Activated B cell treated with CpG ODN at 0.5 μM for 24 hours (primary cell): ENCODE measurements at regions of chr2 and their contacts with region 1.

Region 1: GRCh38 chr2:24075915-24076848 is at the start of gene SF3B6:
- DNase-seq: peak; percentile 98
- ATAC-seq: peak; percentile 87
- H3K4me3 Mint-ChIP-seq: peak within 1 kb of the TSS; percentile 100
- H3K27ac Mint-ChIP-seq: peak within 1 kb of the TSS; percentile 99
- H3K4me1 Mint-ChIP-seq: peaks cover 28% of the 10 kb centered on the region
- H3K27me3 Mint-ChIP-seq: no peaks in the 10 kb centered on the region
- CTCF ChIP-seq: no peak
- total RNA-seq, gene SF3B6: 70.4 and 71.4 TPM in 2 replicates

Region 2: GRCh38 chr2:22673529-22673928 is 1402.7 kb before region 1 on chr2:
- CTCF ChIA-PET with region 1: no interaction called
- POLR2A ChIA-PET with region 1: no interaction called
- intact Hi-C with region 1: no loop called
- DNase-seq: no peak
- ATAC-seq: no peak
- H3K4me3 Mint-ChIP-seq: no peak overlapping the region
- H3K27ac Mint-ChIP-seq: no peak overlapping the region
- H3K4me1 Mint-ChIP-seq: no peaks in the 10 kb centered on the region
- H3K27me3 Mint-ChIP-seq: no peaks in the 10 kb centered on the region
- CTCF ChIP-seq: no peak

Region 3: DNA sequence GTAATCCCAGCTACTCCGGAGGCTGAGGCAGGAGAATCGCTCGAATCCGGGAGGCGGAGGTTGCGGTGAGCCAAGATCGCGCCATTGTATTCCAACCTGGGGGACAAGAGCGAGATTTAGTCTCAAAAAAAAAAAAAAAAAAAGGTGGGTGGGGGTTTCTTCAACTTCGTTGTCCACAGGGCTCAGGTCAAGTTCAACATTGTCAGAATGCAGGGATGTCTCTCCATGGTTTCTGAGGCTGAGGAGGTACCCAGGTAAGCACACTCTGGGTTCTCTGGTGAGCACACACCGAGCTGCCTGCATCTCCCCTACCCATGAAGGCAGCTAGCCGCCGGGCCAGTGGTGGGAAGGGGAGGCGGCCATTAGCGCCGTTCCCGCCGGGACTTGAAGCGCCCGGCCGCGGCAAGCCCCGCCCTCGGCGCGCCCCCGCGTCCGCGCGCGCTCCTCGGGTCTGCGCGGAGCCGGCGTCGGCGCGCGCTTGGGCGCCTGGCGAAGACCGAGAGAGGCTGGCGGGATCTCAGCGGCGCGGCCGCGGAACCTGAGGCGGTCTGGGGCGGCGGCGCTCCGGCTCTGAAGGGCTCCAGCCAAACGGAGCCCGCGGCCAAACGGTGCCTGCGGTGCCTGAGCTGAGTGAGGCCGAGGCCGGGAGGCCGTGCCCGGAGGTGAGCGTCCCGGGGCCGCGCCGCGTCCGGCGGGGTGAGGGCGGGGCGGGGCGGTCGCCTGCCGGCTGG is 136.0 kb before region 1 on chr2 and contains the start of gene UBXN2A:
- CTCF ChIA-PET with region 1: no interaction called
- POLR2A ChIA-PET with region 1: interaction called, 22 read pairs
- intact Hi-C with region 1: loop called (anchors 1 kb)
- DNase-seq: peak; percentile 87
- ATAC-seq: peak; percentile 82
- H3K4me3 Mint-ChIP-seq: peak within 1 kb of the TSS; percentile 88
- H3K27ac Mint-ChIP-seq: peak within 1 kb of the TSS; percentile 81
- H3K4me1 Mint-ChIP-seq: peaks cover 13% of the 10 kb centered on the region
- H3K27me3 Mint-ChIP-seq: no peaks in the 10 kb centered on the region
- CTCF ChIP-seq: no peak
- total RNA-seq, gene UBXN2A: 9.4 and 12.8 TPM in 2 replicates

Region 4: GRCh38 chr2:24046930-24047702 is 29.1 kb before region 1 on chr2 and contains the start of gene WDCP:
- CTCF ChIA-PET with region 1: interaction called, 5 read pairs
- POLR2A ChIA-PET with region 1: interaction called, 45 read pairs
- intact Hi-C with region 1: loop called (anchors 1 kb)
- DNase-seq: peak; percentile 79
- ATAC-seq: peak; percentile 98
- H3K4me3 Mint-ChIP-seq: peak within 1 kb of the TSS; percentile 96
- H3K27ac Mint-ChIP-seq: peak within 1 kb of the TSS; percentile 89
- H3K4me1 Mint-ChIP-seq: peaks cover 29% of the 10 kb centered on the region
- H3K27me3 Mint-ChIP-seq: no peaks in the 10 kb centered on the region
- CTCF ChIP-seq: no peak
- total RNA-seq, gene WDCP: 20.0 and 20.6 TPM in 2 replicates

Region 5: DNA sequence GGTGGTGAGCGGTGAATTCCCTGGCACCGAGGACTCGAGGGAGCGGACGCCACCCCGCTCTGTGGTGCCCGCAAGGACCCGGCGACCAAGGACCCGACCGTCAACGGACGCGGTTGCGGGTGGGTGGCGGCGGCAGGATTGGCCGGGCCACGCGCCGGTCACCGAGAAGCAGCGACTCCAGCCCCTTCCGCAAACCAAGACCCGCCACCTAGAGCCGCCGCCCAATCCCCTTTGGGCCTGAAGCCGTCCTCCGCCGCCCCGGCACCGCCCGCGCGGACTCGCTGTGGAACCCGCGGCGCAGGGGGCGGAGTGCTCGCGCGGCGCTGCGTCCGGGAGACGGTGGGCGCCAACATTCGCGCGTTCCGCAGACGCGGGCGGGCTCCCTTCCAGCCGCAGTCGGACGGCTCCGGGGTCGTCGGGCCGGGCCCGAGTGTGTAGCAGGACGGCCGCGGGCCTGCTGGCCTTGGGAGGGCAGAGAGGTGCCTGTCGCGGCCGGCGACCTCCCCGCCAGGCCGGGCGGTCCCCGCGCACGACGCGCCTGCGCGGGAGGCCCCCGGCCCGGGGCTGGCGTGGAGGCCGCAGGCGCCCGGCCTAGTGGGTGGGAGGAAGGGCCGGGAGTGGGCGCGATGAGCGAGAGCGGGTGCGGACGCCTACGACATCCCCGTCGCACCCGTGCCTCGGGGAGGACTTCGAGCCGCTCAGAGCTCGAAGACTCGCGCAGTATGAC is 47.2 kb after region 1 on chr2 and contains the starts of genes FAM228B and PFN4:
- CTCF ChIA-PET with region 1: no interaction called
- POLR2A ChIA-PET with region 1: interaction called, 12 read pairs
- intact Hi-C with region 1: loop called (anchors 1 kb)
- DNase-seq: peak; percentile 82
- ATAC-seq: peak; percentile 93
- H3K4me3 Mint-ChIP-seq: peak within 1 kb of the TSS; percentile 85
- H3K27ac Mint-ChIP-seq: peak within 1 kb of the TSS; percentile 92
- H3K4me1 Mint-ChIP-seq: peaks cover 15% of the 10 kb centered on the region
- H3K27me3 Mint-ChIP-seq: no peaks in the 10 kb centered on the region
- CTCF ChIP-seq: no peak
- total RNA-seq, gene FAM228B: 24.7 and 26.2 TPM in 2 replicates
- total RNA-seq, gene PFN4: 0.34 and 0.60 TPM in 2 replicates

Region 6: DNA sequence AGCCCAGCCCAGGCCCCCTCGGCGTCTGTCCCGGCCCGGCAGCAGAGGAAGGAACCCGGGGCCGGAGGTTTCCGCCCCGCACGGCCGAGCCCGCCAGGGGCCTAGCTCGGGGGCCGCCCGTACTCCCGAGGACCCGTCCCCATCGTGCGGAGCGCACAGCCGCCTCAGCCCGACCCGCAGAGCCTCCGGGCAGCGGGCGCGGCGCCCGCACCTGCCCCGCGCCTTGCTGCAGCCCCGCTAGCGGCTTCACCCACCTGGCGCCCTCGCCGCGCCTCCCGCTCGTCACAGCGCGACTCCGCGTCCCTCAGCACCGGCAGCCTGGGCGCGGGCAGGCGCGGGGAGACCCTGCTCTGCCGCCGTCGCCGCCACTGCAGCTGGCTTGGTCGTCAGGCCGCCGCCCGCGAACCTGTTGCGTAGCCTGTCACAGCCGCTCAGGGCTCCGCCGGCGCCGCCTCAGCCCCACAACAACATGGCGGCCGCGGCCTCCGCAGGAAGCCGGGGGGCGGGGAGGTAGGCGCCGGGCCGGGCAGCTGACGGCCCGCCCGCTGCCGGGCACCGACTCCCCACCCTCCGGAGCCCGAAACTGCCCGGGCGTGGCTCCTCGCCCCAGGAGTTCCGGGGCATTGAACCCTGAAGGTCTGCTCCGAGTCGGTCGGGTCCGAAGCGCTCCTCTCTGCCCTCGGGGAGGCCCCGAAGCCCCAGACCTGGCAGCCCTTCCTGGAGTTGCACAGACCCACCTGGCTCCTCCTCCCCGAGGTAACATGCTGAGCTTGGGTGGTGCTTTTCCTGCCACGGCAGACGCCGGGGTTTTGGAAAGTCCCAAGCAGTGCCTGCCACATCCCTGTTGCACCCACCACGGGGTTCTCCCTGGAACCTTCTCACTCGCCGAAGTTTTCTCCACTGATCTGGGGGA is 284.1 kb after region 1 on chr2 and contains the start of gene ITSN2:
- CTCF ChIA-PET with region 1: no interaction called
- POLR2A ChIA-PET with region 1: no interaction called
- intact Hi-C with region 1: loop called (anchors 1 kb)
- DNase-seq: peak; percentile 88
- ATAC-seq: peak; percentile 85
- H3K4me3 Mint-ChIP-seq: peak within 1 kb of the TSS; percentile 91
- H3K27ac Mint-ChIP-seq: peak within 1 kb of the TSS; percentile 97
- H3K4me1 Mint-ChIP-seq: peaks cover 50% of the 10 kb centered on the region
- H3K27me3 Mint-ChIP-seq: no peaks in the 10 kb centered on the region
- CTCF ChIP-seq: no peak
- total RNA-seq, gene ITSN2: 147 and 156 TPM in 2 replicates

Region 7: GRCh38 chr2:24792874-24793760 is 716.9 kb after region 1 on chr2 and contains the starts of genes CENPO and PTRHD1:
- CTCF ChIA-PET with region 1: no interaction called
- POLR2A ChIA-PET with region 1: no interaction called
- intact Hi-C with region 1: loop called (anchors 5 kb)
- DNase-seq: peak; percentile 94
- ATAC-seq: peak; percentile 98
- H3K4me3 Mint-ChIP-seq: peak within 1 kb of the TSS; percentile 98
- H3K27ac Mint-ChIP-seq: peak within 1 kb of the TSS; percentile 100
- H3K4me1 Mint-ChIP-seq: peaks cover 18% of the 10 kb centered on the region
- H3K27me3 Mint-ChIP-seq: no peaks in the 10 kb centered on the region
- CTCF ChIP-seq: no peak
- total RNA-seq, gene CENPO: 11.2 and 13.4 TPM in 2 replicates
- total RNA-seq, gene PTRHD1: 39.6 and 41.1 TPM in 2 replicates